ENCODE measurements at regions of chr13 and their contacts with region 1.

Region 1: DNA sequence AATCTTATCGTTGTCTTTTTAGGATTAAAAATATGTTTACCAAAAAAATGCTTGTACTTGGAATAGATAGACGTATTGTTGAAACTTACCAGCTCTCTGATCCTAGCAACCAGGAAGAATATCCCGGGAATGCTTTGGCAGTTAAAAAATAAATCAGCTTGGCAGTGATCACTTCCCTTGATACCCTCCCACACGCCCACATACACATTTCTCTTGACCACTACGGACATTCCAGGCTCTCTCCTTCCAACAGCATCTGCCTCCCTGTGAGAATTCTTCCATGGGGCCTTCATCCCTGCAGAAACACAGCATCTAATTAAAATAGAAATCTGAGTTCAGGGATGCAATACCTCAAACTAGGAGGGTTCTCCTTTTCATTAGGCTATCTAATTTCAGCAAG is 57.9 kb downstream of the THSD1 start:
- DNase-seq: no peak
- H3K4me3 Mint-ChIP-seq: no peak overlapping the region
- H3K27ac Mint-ChIP-seq: no peak overlapping the region
- H3K4me1 Mint-ChIP-seq: peaks cover 10% of the 10 kb centered on the region
- H3K27me3 Mint-ChIP-seq: no peaks in the 10 kb centered on the region
- CTCF ChIP-seq: no peak

Region 2: DNA sequence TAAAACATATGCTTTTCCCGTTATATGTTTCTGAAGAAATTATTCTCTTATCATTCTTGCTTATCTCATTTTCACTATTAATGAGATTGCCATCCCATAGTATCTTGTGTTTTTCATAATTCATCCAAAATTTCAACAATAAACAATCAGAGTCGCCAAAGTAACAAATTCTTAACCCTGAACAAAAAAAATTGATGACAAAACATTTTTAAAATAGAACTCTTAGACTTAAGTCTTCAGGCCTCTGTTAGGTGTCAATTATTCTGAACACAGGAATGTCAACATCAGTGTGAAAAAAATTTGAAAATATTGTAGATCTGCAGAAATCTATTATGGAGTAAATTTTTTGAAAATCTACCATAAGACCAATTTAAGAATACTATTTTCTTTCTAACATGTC is 256.6 kb before region 1 on chr13:
- CTCF ChIA-PET with region 1: no interaction called
- intact Hi-C with region 1: no loop called
- DNase-seq: no peak
- H3K4me3 Mint-ChIP-seq: no peak overlapping the region
- H3K27ac Mint-ChIP-seq: no peak overlapping the region
- H3K4me1 Mint-ChIP-seq: no peaks in the 10 kb centered on the region
- H3K27me3 Mint-ChIP-seq: no peaks in the 10 kb centered on the region
- CTCF ChIP-seq: no peak

Region 3: GRCh38 chr13:52411629-52412028 is 63.6 kb after region 1 on chr13:
- CTCF ChIA-PET with region 1: interaction called, 3 read pairs
- intact Hi-C with region 1: loop called (anchors 5 kb)
- DNase-seq: peak; percentile 24
- H3K4me3 Mint-ChIP-seq: peak overlapping the region; percentile 57
- H3K27ac Mint-ChIP-seq: peak overlapping the region; percentile 88
- H3K4me1 Mint-ChIP-seq: peaks cover 19% of the 10 kb centered on the region
- H3K27me3 Mint-ChIP-seq: no peaks in the 10 kb centered on the region
- CTCF ChIP-seq: no peak

Region 4: GRCh38 chr13:54312885-54313284 is 1964.8 kb after region 1 on chr13:
- CTCF ChIA-PET with region 1: no interaction called
- intact Hi-C with region 1: no loop called
- DNase-seq: no peak
- H3K4me3 Mint-ChIP-seq: no peak overlapping the region
- H3K27ac Mint-ChIP-seq: no peak overlapping the region
- H3K4me1 Mint-ChIP-seq: no peaks in the 10 kb centered on the region
- H3K27me3 Mint-ChIP-seq: no peaks in the 10 kb centered on the region
- CTCF ChIP-seq: no peak

Measured in Calu3 (cell line).